Sigmoid colon (tissue), 7 donors: ENCODE measurements at regions of chr2 and their contacts with region 1.

Region 1: DNA sequence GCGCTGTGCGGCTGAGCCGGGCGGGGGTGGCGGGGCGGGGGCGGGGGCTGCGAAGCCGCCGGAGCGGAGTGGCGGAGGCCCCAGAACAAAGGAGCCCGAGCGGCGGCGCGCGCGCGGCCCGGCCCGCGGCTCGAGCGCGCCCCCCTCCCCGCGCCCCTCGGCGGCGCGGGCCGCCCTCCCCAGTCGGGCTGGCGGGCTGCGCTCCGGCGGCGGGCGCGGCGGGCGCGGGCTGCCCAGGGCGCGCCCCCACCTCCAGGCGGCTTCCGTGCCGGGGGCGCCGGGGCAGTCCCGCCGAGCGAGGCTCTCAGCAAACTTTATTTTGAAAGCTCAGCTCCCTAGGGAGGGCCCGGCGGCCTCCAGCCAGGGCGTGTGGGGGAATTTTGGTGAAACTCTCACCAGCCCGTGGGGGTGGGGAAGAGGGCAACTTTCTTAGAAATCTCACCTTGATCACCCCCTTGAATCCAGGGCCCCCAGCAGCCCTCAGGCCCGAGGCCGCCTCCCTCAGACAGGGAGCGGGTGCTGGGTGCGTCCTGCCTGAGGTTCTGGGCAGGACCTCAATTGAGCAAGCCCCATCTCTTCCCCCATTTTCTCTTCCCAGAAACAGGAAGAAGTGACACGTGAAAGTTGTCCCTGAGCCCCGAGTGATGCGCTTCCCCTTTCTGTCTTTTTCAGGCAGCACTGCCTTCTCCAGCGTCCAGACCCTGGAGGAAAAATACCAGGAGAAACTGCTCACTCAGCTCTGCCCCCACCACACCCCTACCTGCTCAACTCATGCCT is 786 bp downstream of the TET3 start:
- DNase-seq: peak; percentile 72
- H3K4me3 ChIP-seq: peak overlapping the region; percentile 41 to 73 (median 63)
- H3K27ac ChIP-seq: peak overlapping the region; percentile 57 to 73 (median 65)
- H3K4me1 ChIP-seq: peaks cover 0 to 62% (median 50%) of the 10 kb centered on the region in 4 donors
- H3K27me3 ChIP-seq: peaks cover 0 to 2% (median 0%) of the 10 kb centered on the region in 3 donors
- CTCF ChIP-seq: no peak
- EP300 ChIP-seq: no peak
- POLR2A ChIP-seq: no peak

Region 2: DNA sequence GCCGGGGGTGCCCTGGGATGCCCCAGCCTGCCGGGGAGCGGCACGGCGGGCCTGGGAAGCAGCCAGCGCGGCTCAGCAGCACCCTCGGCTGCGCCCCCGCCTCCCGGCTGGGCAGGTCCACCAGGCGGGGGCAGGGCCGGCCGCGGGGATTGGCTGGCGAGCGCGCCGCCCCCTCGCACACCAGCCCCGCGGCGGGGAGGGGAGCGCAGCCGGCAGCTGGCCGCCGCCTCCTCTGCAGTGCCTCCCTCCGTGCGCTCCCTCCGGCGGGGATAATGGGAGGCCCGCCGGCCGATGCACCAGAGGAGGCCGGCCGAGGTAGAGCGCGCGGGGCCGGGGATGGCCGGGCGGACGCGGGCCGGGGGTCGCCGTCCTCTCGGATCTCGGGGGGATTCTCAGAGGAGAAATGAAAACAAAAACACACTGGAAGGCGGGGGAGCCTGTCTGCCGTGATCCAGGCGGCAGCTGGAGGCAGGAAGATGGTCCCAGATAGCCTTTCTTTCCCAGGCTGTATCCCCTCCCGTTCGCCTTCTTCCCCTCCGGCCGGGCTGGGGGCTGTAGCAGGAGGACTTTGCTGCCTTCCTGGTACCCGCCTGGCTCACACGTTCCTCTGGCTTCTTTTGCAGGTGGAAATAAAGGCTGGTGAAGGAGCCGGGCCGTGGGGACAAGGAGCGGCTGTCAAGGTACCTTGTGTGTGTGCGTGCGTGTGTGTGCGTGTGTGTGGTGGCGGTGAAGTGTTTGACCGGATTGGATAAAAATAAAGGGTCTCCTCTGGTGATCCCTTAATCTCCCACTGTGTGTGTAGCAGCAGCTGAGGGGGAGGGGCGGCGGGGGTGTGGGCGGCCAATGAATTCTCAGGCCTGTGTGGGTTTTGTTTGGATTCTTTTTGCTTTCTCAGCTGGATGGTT is 17.2 kb after region 1 on chr2:
- intact Hi-C with region 1: loop called (anchors 2 kb)
- DNase-seq: peak; percentile 90
- H3K4me3 ChIP-seq: peak overlapping the region; percentile 43 to 74 (median 56)
- H3K27ac ChIP-seq: peak overlapping the region; percentile 62 to 77 (median 68)
- H3K4me1 ChIP-seq: peaks cover 0 to 63% (median 51%) of the 10 kb centered on the region in 4 donors
- H3K27me3 ChIP-seq: no peaks in the 10 kb centered on the region
- CTCF ChIP-seq: peak in 1 of 4 experiments; percentile 7
- EP300 ChIP-seq: no peak
- POLR2A ChIP-seq: peak in 1 of 2 donors; percentile 22

Region 3: GRCh38 chr2:74119912-74120825 is 134.7 kb after region 1 on chr2:
- intact Hi-C with region 1: loop called (anchors 5 kb)
- DNase-seq: peak; percentile 90
- H3K4me3 ChIP-seq: peak overlapping the region; percentile 72 to 79 (median 76)
- H3K27ac ChIP-seq: peak overlapping the region; percentile 87 to 90 (median 89)
- H3K4me1 ChIP-seq: peaks cover 0 to 10% (median 3%) of the 10 kb centered on the region in 4 donors
- H3K27me3 ChIP-seq: no peaks in the 10 kb centered on the region
- CTCF ChIP-seq: peak in 2 of 4 experiments; percentile 31 to 72
- EP300 ChIP-seq: no peak
- POLR2A ChIP-seq: no peak